T-cell (primary cell): ENCODE measurements at regions of chr1 and their contacts with region 1.

Region 1: GRCh38 chr1:204565617-204566582 is 49.7 kb downstream of the MDM4 start:
- DNase-seq: peak in 34 of 35 experiments; percentile 29 to 81 (median 54)
- ATAC-seq: peak; percentile 79 to 90 (median 84)
- H3K4me3 ChIP-seq: no peak overlapping the region
- H3K4me3 Mint-ChIP-seq: peak overlapping the region in 1 of 3 donors; percentile 26
- H3K27ac ChIP-seq: peak overlapping the region; percentile 11
- H3K27ac Mint-ChIP-seq: peak overlapping the region; percentile 70 to 81
- H3K4me1 ChIP-seq: peaks cover 7 to 41% of the 10 kb centered on the region in 2 experiments
- H3K4me1 Mint-ChIP-seq: peaks cover 49 to 62% (median 52%) of the 10 kb centered on the region in 3 donors
- H3K27me3 ChIP-seq: no peaks in the 10 kb centered on the region
- H3K27me3 Mint-ChIP-seq: no peaks in the 10 kb centered on the region

Region 2: DNA sequence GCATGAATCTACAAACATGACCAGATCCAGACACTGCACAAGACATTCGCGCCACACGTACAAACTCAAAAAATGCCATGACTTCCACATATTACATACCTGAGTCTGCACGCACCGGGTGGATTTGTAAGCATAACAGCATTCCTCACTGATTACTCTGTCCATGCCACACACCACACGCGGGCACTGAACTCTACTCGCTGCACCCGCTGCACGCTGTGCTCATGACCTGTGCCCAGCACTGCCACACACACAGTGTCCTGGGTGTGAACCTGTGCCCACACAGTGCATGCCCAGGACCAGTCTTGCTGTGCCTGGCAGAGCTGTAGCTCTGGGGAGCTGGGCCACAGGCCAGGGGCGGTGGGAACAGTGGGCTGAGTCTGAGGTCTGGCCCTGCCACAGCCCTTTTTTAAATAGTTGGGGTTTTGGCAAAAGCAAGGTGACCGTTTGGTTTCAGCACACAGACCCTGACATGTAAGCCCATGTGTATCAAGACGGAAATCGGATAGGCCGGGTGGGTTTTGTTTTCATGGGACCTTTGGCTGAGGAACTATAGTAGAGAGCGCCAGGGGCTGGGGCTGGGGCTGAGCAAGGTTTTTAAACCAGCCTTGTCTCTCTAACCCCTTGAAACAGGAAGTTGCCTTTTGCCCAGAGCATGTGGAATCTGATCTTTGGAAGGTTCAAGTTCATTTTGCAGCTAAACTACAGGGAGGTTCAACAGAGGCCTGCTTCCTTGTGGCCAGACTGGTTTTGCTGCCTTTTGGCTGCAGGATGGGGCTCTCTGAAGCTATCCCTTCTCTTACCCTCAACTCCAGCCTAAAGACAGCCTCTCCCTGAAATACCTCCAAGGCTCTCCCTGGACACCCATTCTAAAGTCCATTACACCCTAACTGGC is 339.8 kb before region 1 on chr1:
- CTCF ChIA-PET with region 1: no interaction called
- POLR2A ChIA-PET with region 1: no interaction called
- DNase-seq: no peak
- ATAC-seq: no peak
- H3K4me3 ChIP-seq: no peak overlapping the region
- H3K4me3 Mint-ChIP-seq: no peak overlapping the region
- H3K27ac ChIP-seq: no peak overlapping the region
- H3K27ac Mint-ChIP-seq: no peak overlapping the region
- H3K4me1 ChIP-seq: no peaks in the 10 kb centered on the region
- H3K4me1 Mint-ChIP-seq: no peaks in the 10 kb centered on the region
- H3K27me3 ChIP-seq: peaks cover 0 to 15% of the 10 kb centered on the region in 2 experiments
- H3K27me3 Mint-ChIP-seq: no peaks in the 10 kb centered on the region

Region 3: GRCh38 chr1:204541626-204542025 is 24.3 kb before region 1 on chr1:
- CTCF ChIA-PET with region 1: interaction called in 1 of 2 experiments, 4 read pairs
- POLR2A ChIA-PET with region 1: interaction called, 5 to 11 read pairs
- DNase-seq: no peak
- ATAC-seq: no peak
- H3K4me3 ChIP-seq: no peak overlapping the region
- H3K4me3 Mint-ChIP-seq: no peak overlapping the region
- H3K27ac ChIP-seq: no peak overlapping the region
- H3K27ac Mint-ChIP-seq: peak overlapping the region; percentile 44 to 73
- H3K4me1 ChIP-seq: peaks cover 27 to 28% of the 10 kb centered on the region in 2 experiments
- H3K4me1 Mint-ChIP-seq: peaks cover 57 to 62% (median 59%) of the 10 kb centered on the region in 3 donors
- H3K27me3 ChIP-seq: no peaks in the 10 kb centered on the region
- H3K27me3 Mint-ChIP-seq: no peaks in the 10 kb centered on the region

Region 4: DNA sequence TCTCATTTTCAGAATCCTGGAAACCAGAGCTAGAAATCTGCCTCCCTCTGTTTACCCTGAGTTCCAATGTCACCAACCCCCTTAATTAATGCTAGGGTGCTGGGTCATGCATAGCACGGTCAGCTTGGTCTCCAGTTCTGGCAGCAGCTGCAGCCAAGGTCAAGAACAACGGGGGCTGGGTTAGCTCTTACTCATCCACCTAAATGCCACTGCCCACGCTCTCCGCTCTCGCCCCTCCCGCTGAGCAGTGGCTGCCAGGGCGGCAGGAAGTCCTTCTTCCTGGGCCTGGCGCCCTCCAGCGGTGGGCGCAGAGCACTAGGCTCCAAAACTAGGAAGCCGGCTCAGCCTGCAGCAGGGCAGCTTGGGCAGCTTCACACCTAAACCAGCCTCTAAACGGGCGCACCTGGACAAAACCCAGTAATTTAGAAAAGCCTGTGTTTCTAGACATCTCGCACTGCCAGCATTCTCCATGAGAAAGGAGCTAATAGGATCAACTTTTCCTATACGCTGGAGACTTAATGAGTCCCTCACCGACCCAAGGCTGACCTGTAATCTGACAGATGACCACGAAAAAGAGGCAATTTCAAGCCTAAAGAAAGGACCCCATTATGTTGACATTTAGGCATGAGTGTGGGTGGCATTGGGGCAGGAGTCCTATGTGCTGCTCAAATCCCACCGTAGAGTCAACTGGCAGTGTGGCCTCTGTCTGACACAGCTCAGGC is 198.0 kb after region 1 on chr1:
- CTCF ChIA-PET with region 1: interaction called, 9 to 13 read pairs
- POLR2A ChIA-PET with region 1: no interaction called
- DNase-seq: peak; percentile 34 to 76 (median 60)
- ATAC-seq: peak; percentile 88 to 95 (median 92)
- H3K4me3 ChIP-seq: no peak overlapping the region
- H3K4me3 Mint-ChIP-seq: peak overlapping the region; percentile 1 to 59 (median 18)
- H3K27ac ChIP-seq: no peak overlapping the region
- H3K27ac Mint-ChIP-seq: no peak overlapping the region
- H3K4me1 ChIP-seq: peaks cover 2 to 10% of the 10 kb centered on the region in 2 experiments
- H3K4me1 Mint-ChIP-seq: peaks cover 7 to 8% (median 7%) of the 10 kb centered on the region in 3 donors
- H3K27me3 ChIP-seq: peaks cover 0 to 23% of the 10 kb centered on the region in 2 experiments
- H3K27me3 Mint-ChIP-seq: peaks cover 7 to 28% of the 10 kb centered on the region in 2 donors